Endothelial cell of umbilical vein (primary cell): ENCODE measurements at regions of chr15 and their contacts with region 1.

Region 1: GRCh38 chr15:81637916-81638315 is 263.9 kb upstream of the TMC3 start:
- DNase-seq: no peak
- H3K4me3 ChIP-seq: no peak overlapping the region
- H3K27ac ChIP-seq: no peak overlapping the region
- H3K4me1 ChIP-seq: no peaks in the 10 kb centered on the region
- H3K27me3 ChIP-seq: no peaks in the 10 kb centered on the region
- CTCF ChIP-seq: no peak
- POLR2A ChIP-seq: no peak

Region 2: DNA sequence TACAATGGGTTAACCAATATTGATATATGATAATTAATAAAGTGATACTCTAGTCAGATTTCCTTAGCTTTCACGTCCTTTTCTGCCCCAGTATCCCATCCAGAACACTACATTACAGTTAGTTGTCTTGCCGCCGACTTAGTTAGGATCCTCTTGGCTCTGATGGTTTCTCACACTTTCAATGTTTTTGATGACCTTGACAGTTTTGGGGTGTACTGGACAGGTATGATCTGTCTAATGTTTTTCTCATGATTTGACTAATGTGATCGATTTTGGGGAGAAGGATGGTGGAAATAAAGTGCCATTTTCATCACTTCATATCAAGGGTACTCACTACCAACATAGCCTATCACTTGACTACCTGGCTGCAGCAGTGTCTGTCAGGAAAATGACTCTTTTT is 18.9 kb before region 1 on chr15:
- CTCF ChIA-PET with region 1: no interaction called
- POLR2A ChIA-PET with region 1: no interaction called
- dilution Hi-C with region 1: no loop called
- intact Hi-C with region 1: loop called (anchors 2 kb)
- DNase-seq: no peak
- H3K4me3 ChIP-seq: no peak overlapping the region
- H3K27ac ChIP-seq: no peak overlapping the region
- H3K4me1 ChIP-seq: no peaks in the 10 kb centered on the region
- H3K27me3 ChIP-seq: no peaks in the 10 kb centered on the region
- CTCF ChIP-seq: no peak
- POLR2A ChIP-seq: no peak